Activated T-helper 1 cell treated with anti-CD3 and anti-CD28 coated beads, Interleukin-12 subunit alpha, Interleukin-12 subunit beta, Interleukin-2, Interleukin-4 antibody, amounts not matched to agents 30 ng/mL and 10 ng/mL and 1 ng/mL, durations not matched to agents 14 hours and 24 hours and 36 hours (primary cell): ENCODE measurements at regions of chr1 and their contacts with region 1.

Region 1: DNA sequence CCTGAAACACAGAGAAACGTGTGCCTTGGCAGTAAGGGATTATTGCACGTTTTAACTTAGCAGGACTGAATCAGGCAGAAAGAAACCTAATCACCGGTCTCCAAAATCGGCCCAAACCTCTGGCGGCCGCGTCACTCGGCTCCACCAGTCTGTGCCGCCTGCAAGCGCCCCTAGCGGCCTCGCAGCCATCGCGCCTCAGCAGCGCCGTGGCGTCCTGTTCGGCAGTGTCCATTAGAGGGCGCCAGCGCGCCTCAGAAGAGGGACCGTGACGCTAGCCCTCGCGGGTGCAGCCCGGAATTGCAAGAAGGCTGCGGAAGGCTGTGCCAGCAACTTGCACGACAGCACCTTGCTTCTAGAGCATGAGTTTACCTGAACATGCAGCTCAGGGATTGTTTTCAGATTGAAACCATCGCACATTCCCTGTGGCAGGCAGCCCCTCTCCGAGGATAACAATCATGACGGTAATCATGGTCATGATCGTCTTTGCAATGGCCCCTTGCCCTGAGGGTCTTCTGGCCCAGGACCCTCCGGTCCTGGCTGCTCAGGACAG is 164.4 kb downstream of the TRIM33 start:
- DNase-seq: peak; percentile 98
- H3K4me3 Mint-ChIP-seq: peak overlapping the region; percentile 93
- H3K27ac Mint-ChIP-seq: peak overlapping the region; percentile 91
- H3K4me1 Mint-ChIP-seq: peaks cover 26% of the 10 kb centered on the region
- H3K27me3 Mint-ChIP-seq: no peaks in the 10 kb centered on the region

Region 2: DNA sequence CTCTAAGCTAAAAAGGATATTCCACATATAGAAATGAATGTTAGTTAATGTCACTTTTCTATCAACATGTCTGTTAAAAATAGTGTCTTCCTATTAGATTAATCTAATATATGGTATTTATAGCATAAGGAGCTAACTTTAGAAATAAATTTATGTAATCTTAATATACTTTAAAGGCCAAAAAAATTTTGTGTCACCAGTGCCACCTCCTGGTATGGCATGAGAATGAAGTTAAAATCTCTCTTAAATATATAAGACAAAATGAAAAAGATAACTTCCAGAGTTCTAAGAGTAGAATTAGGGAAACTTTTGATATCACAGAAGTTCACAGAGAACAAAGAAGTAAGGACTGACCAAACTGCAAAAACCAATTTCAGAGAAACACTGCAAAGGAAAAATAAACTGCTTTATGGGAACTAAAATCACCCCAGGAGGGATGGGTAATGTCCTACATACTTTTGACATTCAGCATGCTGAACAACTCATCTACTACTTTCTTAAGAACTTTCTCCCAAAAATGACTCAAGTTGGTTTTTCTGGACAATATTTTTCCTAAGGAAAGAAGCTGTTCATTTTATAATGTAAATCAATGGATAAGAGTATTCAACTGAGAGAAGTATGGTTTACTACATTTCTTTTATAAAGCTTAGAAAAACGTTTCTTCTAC is 81.7 kb after region 1 on chr1:
- intact Hi-C with region 1: loop called (anchors 1 kb)
- DNase-seq: no peak
- H3K4me3 Mint-ChIP-seq: no peak overlapping the region
- H3K27ac Mint-ChIP-seq: no peak overlapping the region
- H3K4me1 Mint-ChIP-seq: peaks cover 6% of the 10 kb centered on the region
- H3K27me3 Mint-ChIP-seq: no peaks in the 10 kb centered on the region

Region 3: GRCh38 chr1:114581335-114582287 is 235.1 kb after region 1 on chr1 and contains the start of gene BCAS2:
- intact Hi-C with region 1: loop called (anchors 1 kb)
- DNase-seq: peak; percentile 94
- H3K4me3 Mint-ChIP-seq: peak within 1 kb of the TSS; percentile 91
- H3K27ac Mint-ChIP-seq: peak within 1 kb of the TSS; percentile 92
- H3K4me1 Mint-ChIP-seq: peaks cover 34% of the 10 kb centered on the region
- H3K27me3 Mint-ChIP-seq: peaks cover 5% of the 10 kb centered on the region
- total RNA-seq, gene BCAS2: 61.9 and 63.0 TPM in 2 replicates

Region 4: DNA sequence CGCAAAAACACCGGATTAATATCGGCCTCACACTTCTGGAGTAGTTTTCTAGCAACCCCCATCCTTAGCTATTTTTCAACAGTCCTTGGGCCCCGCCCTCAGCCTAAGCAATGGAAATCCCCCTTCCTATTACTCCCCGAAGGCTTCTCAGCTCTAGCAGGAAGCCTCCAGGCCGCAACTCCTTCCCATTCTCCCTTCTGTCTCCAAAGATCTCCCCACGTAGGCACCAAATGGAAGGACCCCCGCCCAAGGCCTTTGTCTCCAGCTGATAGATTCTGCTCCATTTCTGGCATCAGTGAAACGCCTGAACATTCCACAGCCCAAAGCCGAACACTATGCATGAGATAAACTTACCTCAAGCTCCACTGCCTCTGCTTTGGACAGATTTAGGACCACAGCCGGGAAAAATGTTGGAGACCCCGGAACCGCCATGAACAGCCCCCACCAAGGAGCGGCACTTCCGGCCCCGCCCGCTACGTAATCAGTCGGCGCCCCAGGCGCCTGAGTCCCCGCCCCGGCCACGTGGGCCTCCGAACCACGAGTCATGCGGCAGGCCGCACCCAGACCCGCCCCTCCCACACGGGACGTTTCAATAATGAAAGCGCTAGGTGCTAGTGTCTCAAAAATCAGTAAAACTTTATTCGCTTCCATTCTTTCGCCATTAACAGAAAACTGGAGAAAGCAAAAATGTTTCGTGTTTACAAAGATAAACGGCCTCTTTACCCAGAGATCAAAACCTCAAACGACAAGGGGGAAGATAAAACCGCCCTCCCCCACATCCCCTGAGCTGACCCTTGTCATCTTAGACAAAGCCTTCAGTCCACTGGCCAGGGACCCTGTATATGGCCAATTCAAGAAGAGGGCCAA is 370.0 kb after region 1 on chr1 and contains the start of gene NRAS:
- intact Hi-C with region 1: loop called (anchors 1 kb)
- DNase-seq: peak; percentile 93
- H3K4me3 Mint-ChIP-seq: peak within 1 kb of the TSS; percentile 99
- H3K27ac Mint-ChIP-seq: peak within 1 kb of the TSS; percentile 99
- H3K4me1 Mint-ChIP-seq: peaks cover 39% of the 10 kb centered on the region
- H3K27me3 Mint-ChIP-seq: no peaks in the 10 kb centered on the region
- total RNA-seq, gene NRAS: 57.5 and 62.1 TPM in 2 replicates

Region 5: GRCh38 chr1:115052454-115053083 is 706.0 kb after region 1 on chr1:
- intact Hi-C with region 1: loop called (anchors 1 kb)
- DNase-seq: peak; percentile 20
- H3K4me3 Mint-ChIP-seq: no peak overlapping the region
- H3K27ac Mint-ChIP-seq: no peak overlapping the region
- H3K4me1 Mint-ChIP-seq: peaks cover 13% of the 10 kb centered on the region
- H3K27me3 Mint-ChIP-seq: peaks cover 6% of the 10 kb centered on the region